ENCODE measurements at regions of chr2 and their contacts with region 1.

Region 1: GRCh38 chr2:127701193-127701650 is at the start of gene SFT2D3:
- DNase-seq: peak; percentile 93
- ATAC-seq: peak; percentile 87 to 97 (median 94)
- H3K4me3 ChIP-seq: peak within 1 kb of the TSS; percentile 33 to 89 (median 61)
- H3K27ac ChIP-seq: peak within 1 kb of the TSS; percentile 78 to 100 (median 95)
- H3K4me1 ChIP-seq: peaks cover 2 to 50% (median 43%) of the 10 kb centered on the region in 9 donors
- H3K27me3 ChIP-seq: no peaks in the 10 kb centered on the region
- CTCF ChIP-seq: no peak
- total RNA-seq, gene SFT2D3: 2.2 to 4.0 (median 3.4) TPM

Region 2: DNA sequence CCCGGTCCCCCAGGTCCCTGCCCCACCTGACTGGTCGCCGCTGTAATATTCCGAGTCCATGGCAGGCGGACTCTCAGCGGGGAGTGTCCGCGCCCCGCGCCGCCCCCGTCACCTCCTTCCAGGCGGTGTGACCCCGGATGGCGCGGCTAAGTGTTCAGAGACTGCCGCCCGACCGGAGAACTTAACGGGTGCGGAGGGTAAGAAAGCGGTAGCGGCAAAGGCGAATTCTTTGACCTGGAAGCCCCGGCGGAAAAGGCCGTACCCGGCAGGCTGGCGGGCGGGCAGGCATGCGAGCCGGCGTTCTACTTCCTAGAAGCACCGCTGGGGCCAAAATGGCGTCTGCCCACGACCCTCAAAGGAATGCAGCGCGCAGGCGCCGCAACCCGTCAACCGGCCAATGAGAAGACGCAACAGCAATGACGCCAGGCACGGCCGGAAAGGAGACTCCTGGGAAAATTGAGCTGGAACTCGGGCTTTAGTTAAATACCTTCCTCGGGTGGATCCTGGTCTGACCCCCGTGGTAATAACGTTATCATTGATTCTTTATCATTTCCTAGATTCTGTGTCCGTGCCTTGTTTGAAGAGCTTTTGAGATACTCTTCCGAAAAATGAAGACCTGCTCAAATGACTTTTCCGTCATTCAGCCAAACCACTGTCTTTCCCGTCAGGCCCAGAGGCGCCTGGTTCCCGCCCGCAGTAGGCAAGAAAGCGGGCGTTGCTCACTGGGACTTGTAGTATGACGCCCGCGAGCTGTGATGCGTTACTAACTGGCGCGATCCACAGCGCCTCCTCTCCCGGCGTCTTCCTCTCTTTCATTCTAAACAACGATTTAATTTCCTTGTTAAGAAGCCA is 174.8 kb before region 1 on chr2 and contains the start of gene IWS1:
- intact Hi-C with region 1: loop called in 5 of 10 experiments (anchors 2 to 10 kb)
- DNase-seq: peak; percentile 94 to 96
- ATAC-seq: peak; percentile 95 to 99 (median 98)
- H3K4me3 ChIP-seq: peak within 1 kb of the TSS; percentile 65 to 100 (median 89)
- H3K27ac ChIP-seq: peak within 1 kb of the TSS; percentile 41 to 98 (median 94)
- H3K4me1 ChIP-seq: peaks cover 0 to 33% (median 23%) of the 10 kb centered on the region in 9 donors
- H3K27me3 ChIP-seq: no peaks in the 10 kb centered on the region
- CTCF ChIP-seq: peak in 7 of 9 donors; percentile 23 to 56 (median 36)
- total RNA-seq, gene IWS1: 37.6 to 64.8 (median 46.4) TPM

Region 3: GRCh38 chr2:127810619-127811396 is 109.6 kb after region 1 on chr2 and contains the start of gene WDR33:
- intact Hi-C with region 1: loop called in 5 of 10 experiments (anchors 2 to 10 kb)
- DNase-seq: peak; percentile 89 to 90
- ATAC-seq: peak; percentile 99 to 100 (median 99)
- H3K4me3 ChIP-seq: peak within 1 kb of the TSS; percentile 61 to 96 (median 80)
- H3K27ac ChIP-seq: peak within 1 kb of the TSS; percentile 69 to 96 (median 88)
- H3K4me1 ChIP-seq: peaks cover 4 to 45% (median 41%) of the 10 kb centered on the region in 9 donors
- H3K27me3 ChIP-seq: no peaks in the 10 kb centered on the region
- CTCF ChIP-seq: peak in 5 of 9 donors; percentile 7 to 41 (median 13)
- total RNA-seq, gene WDR33: 38.5 to 47.6 (median 42.9) TPM

Region 4: DNA sequence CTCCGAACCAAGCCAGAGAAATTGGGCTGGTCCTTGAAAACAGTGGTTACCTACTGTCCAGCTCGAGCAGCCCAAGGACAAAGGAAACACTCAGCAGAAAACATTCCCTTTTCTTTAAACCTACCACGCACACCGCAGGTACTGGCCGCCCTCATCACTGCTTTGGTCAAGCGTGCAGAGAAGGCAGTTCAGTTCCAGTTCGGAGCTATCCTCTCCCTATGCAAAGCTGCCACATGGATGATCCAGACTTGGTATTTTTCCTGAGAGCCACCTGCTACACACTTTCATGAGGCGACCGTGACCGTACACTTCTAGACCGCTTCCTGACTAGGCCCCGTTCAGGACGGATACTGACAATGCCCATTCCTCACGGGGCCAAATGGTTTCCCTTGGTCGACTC is 161.0 kb after region 1 on chr2:
- intact Hi-C with region 1: no loop called
- DNase-seq: no peak
- ATAC-seq: no peak
- H3K4me3 ChIP-seq: no peak overlapping the region
- H3K27ac ChIP-seq: no peak overlapping the region
- H3K4me1 ChIP-seq: peaks cover 2 to 37% (median 21%) of the 10 kb centered on the region in 9 donors
- H3K27me3 ChIP-seq: no peaks in the 10 kb centered on the region
- CTCF ChIP-seq: no peak

Region 5: DNA sequence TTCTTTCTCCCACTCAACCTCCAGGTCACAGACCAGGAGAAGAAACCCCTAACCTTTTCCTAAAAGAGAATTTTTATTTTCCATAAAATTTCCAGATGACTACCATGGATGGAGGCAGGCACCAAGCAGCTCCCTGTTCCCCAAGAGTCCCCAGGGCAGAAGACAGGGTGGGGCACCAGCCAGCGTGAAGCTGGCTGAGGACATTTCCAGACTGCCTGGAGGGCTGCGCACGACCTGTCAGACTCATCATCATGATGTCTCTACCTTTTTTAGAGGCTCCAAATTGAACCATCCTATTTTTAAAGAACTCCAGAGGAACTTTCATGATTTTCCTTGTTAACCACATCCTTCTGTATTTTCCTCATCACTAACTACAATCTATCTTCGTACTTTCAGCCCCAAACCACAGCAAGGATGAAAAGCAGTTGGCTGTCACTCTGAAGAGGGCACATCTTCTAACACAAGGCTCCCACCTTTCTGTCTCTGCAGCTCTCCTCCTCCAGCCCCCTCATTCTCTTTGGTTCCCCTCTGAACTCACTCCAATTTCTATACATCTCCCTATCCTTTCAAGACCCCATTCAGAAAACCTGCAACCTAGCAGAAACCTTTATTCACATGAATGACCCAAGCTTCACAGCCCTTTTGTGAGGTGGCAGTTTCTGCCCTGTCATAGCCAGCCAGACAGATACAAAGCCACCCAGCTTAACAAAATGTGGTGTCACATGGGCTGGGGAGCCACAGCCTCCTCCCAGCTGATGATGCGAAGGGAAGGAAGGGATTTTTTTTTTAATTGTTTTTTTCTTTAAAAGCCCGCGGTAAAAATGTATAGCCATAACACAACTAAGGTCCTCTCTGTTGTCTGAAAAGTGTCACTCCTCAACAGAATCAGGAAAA is 173.4 kb after region 1 on chr2:
- intact Hi-C with region 1: loop called in 1 of 10 experiments (anchors 10 kb)
- DNase-seq: no peak
- ATAC-seq: peak in 2 of 8 donors; percentile 21 to 45
- H3K4me3 ChIP-seq: no peak overlapping the region
- H3K27ac ChIP-seq: peak overlapping the region in 1 of 10 donors; percentile 4
- H3K4me1 ChIP-seq: peaks cover 0 to 38% (median 21%) of the 10 kb centered on the region in 9 donors
- H3K27me3 ChIP-seq: no peaks in the 10 kb centered on the region
- CTCF ChIP-seq: no peak

Region 6: DNA sequence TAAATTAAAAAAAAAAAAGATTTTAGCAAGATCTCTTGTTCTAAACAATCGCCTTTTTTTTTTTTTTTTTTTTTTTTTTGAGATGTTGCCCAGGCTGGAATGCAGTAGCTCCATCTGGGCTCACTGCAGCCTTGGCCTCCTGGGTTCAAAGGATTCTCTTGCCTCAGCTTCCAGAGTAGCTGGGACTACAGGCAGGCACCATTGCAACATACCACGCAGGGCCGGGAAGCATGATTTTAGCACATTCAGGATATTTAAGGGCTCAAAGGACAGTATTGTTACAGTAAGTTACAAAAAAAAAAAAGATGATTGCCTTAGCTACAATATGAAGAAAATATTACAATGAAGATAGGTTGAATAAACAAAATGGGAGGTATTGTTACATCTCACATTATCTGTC is 356.1 kb after region 1 on chr2:
- intact Hi-C with region 1: no loop called
- DNase-seq: no peak
- ATAC-seq: no peak
- H3K4me3 ChIP-seq: no peak overlapping the region
- H3K27ac ChIP-seq: no peak overlapping the region
- H3K4me1 ChIP-seq: no peaks in the 10 kb centered on the region
- H3K27me3 ChIP-seq: peaks cover 0 to 9% (median 0%) of the 10 kb centered on the region in 7 donors
- CTCF ChIP-seq: no peak

Measured in heart right ventricle (tissue), 16 donors.